CD4-positive, alpha-beta memory T cell (primary cell): ENCODE measurements at regions of chr1 and their contacts with region 1.

Region 1: GRCh38 chr1:159071970-159072582 is 4.5 kb downstream of the AIM2 start:
- DNase-seq: peak in 4 of 5 donors; percentile 43 to 54 (median 50)
- H3K4me3 ChIP-seq: no peak overlapping the region
- H3K4me3 Mint-ChIP-seq: peak overlapping the region in 1 of 8 donors; percentile 3
- H3K27ac ChIP-seq: no peak overlapping the region
- H3K27ac Mint-ChIP-seq: peak overlapping the region in 4 of 7 donors; percentile 10 to 72 (median 58)
- H3K4me1 ChIP-seq: peaks cover 60% of the 10 kb centered on the region
- H3K4me1 Mint-ChIP-seq: peaks cover 25 to 58% (median 39%) of the 10 kb centered on the region in 4 donors
- H3K27me3 ChIP-seq: no peaks in the 10 kb centered on the region
- H3K27me3 Mint-ChIP-seq: no peaks in the 10 kb centered on the region

Region 2: GRCh38 chr1:158203693-158204457 is 868.2 kb before region 1 on chr1:
- CTCF ChIA-PET with region 1: interaction called, 120 read pairs
- POLR2A ChIA-PET with region 1: interaction called, 3 read pairs
- intact Hi-C with region 1: loop called (anchors 1 kb)
- DNase-seq: peak in 4 of 5 donors; percentile 31 to 53 (median 36)
- H3K4me3 ChIP-seq: no peak overlapping the region
- H3K4me3 Mint-ChIP-seq: peak overlapping the region in 1 of 8 donors; percentile 43
- H3K27ac ChIP-seq: no peak overlapping the region
- H3K27ac Mint-ChIP-seq: no peak overlapping the region
- H3K4me1 ChIP-seq: peaks cover 10% of the 10 kb centered on the region
- H3K4me1 Mint-ChIP-seq: peaks cover 7 to 11% (median 9%) of the 10 kb centered on the region in 4 donors
- H3K27me3 ChIP-seq: no peaks in the 10 kb centered on the region
- H3K27me3 Mint-ChIP-seq: peaks cover 13 to 19% of the 10 kb centered on the region in 2 donors

Region 3: GRCh38 chr1:158793604-158794003 is 278.5 kb before region 1 on chr1:
- CTCF ChIA-PET with region 1: interaction called, 10 read pairs
- POLR2A ChIA-PET with region 1: interaction called, 5 read pairs
- intact Hi-C with region 1: loop called (anchors 5 kb)
- DNase-seq: peak in 4 of 5 donors; percentile 26 to 39 (median 33)
- H3K4me3 ChIP-seq: no peak overlapping the region
- H3K4me3 Mint-ChIP-seq: no peak overlapping the region
- H3K27ac ChIP-seq: no peak overlapping the region
- H3K27ac Mint-ChIP-seq: peak overlapping the region in 1 of 7 donors; percentile 37
- H3K4me1 ChIP-seq: no peaks in the 10 kb centered on the region
- H3K4me1 Mint-ChIP-seq: no peaks in the 10 kb centered on the region
- H3K27me3 ChIP-seq: no peaks in the 10 kb centered on the region
- H3K27me3 Mint-ChIP-seq: peaks cover 0 to 3% of the 10 kb centered on the region in 2 donors

Region 4: DNA sequence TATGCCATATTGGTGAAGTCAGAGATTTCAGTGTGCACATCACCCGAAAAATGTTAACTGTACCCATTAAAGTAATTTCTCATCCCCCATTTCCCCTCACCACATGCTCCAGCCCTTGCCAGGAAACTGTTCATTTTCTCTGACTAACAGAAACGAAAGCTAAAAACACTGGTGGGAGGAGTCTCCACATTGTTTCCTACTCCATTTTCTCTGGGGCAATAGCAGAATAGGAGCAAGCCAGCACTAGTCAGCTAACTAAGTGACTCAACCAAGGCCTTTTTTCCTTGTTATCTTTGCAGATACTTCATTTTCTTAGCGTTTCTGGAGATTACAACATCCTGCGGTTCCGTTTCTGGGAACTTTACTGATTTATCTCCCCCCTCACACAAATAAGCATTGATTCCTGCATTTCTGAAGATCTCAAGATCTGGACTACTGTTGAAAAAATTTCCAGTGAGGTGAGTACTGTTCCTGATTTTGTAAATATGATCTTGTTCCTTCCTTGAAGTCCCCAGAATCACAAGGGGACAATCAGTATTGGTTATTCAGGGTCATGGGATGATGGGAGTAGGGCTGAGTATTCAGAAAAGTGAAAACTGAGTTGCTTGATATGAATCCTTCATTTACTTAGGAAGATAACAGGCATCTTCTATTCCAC is 62.2 kb before region 1 on chr1 and contains the start of gene IFI16:
- CTCF ChIA-PET with region 1: interaction called, 18 read pairs
- POLR2A ChIA-PET with region 1: interaction called, 42 read pairs
- intact Hi-C with region 1: loop called (anchors 1 kb)
- DNase-seq: peak; percentile 70 to 85 (median 77)
- H3K4me3 ChIP-seq: peak within 1 kb of the TSS; percentile 54 to 97
- H3K4me3 Mint-ChIP-seq: peak within 1 kb of the TSS; percentile 89 to 99 (median 97)
- H3K27ac ChIP-seq: peak within 1 kb of the TSS; percentile 88
- H3K27ac Mint-ChIP-seq: peak within 1 kb of the TSS; percentile 87 to 95 (median 93)
- H3K4me1 ChIP-seq: peaks cover 36% of the 10 kb centered on the region
- H3K4me1 Mint-ChIP-seq: peaks cover 40 to 71% (median 46%) of the 10 kb centered on the region in 4 donors
- H3K27me3 ChIP-seq: no peaks in the 10 kb centered on the region
- H3K27me3 Mint-ChIP-seq: no peaks in the 10 kb centered on the region
- total RNA-seq, gene IFI16: 160 to 162 TPM

Region 5: GRCh38 chr1:159030877-159031447 is 41.1 kb before region 1 on chr1:
- CTCF ChIA-PET with region 1: interaction called, 15 read pairs
- POLR2A ChIA-PET with region 1: interaction called, 4 read pairs
- intact Hi-C with region 1: no loop called
- DNase-seq: no peak
- H3K4me3 ChIP-seq: no peak overlapping the region
- H3K4me3 Mint-ChIP-seq: no peak overlapping the region
- H3K27ac ChIP-seq: no peak overlapping the region
- H3K27ac Mint-ChIP-seq: peak overlapping the region in 6 of 7 donors; percentile 14 to 77 (median 66)
- H3K4me1 ChIP-seq: peaks cover 41% of the 10 kb centered on the region
- H3K4me1 Mint-ChIP-seq: peaks cover 55 to 78% (median 67%) of the 10 kb centered on the region in 4 donors
- H3K27me3 ChIP-seq: no peaks in the 10 kb centered on the region
- H3K27me3 Mint-ChIP-seq: no peaks in the 10 kb centered on the region

Region 6: DNA sequence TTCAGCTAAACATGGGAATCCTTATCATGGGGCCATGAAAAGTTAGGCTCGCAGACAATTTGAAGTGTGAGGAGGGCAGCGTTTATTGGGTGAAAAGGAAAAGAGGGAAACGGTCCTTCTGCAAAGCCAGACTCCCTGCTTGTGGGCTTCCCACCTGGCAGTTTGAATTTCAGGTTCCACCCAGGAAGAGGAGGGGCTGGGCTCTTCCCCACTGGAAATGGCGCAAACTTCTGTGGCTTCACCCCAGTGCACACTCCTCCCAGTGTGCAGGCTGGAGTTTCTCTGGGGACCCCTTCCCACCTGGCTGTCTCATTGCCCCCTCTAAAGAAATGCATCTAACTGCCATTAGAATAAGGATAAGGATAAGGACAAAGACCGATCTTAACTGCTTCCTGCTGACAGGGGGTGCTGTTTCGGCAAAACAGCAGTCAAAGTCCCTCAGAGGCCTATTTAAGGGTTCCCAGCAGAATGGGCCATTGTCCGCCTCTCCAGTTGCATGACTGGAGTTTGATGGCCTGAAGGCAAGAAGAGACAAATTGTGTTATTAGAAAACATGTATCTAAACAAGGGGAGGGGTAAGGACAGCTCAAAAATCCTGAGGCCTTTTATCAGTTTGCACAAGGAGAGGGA is 15.9 kb before region 1 on chr1:
- CTCF ChIA-PET with region 1: interaction called, 30 read pairs
- POLR2A ChIA-PET with region 1: interaction called, 15 read pairs
- intact Hi-C with region 1: no loop called
- DNase-seq: no peak
- H3K4me3 ChIP-seq: no peak overlapping the region
- H3K4me3 Mint-ChIP-seq: no peak overlapping the region
- H3K27ac ChIP-seq: no peak overlapping the region
- H3K27ac Mint-ChIP-seq: peak overlapping the region in 6 of 7 donors; percentile 42 to 85 (median 69)
- H3K4me1 ChIP-seq: peaks cover 36% of the 10 kb centered on the region
- H3K4me1 Mint-ChIP-seq: peaks cover 30 to 44% (median 42%) of the 10 kb centered on the region in 4 donors
- H3K27me3 ChIP-seq: no peaks in the 10 kb centered on the region
- H3K27me3 Mint-ChIP-seq: no peaks in the 10 kb centered on the region

Region 7: GRCh38 chr1:159089184-159089791 is 17.2 kb after region 1 on chr1:
- CTCF ChIA-PET with region 1: interaction called, 44 read pairs
- POLR2A ChIA-PET with region 1: interaction called, 3 read pairs
- intact Hi-C with region 1: loop called (anchors 1 kb)
- DNase-seq: peak in 4 of 5 donors; percentile 39 to 57 (median 40)
- H3K4me3 ChIP-seq: no peak overlapping the region
- H3K4me3 Mint-ChIP-seq: no peak overlapping the region
- H3K27ac ChIP-seq: no peak overlapping the region
- H3K27ac Mint-ChIP-seq: no peak overlapping the region
- H3K4me1 ChIP-seq: peaks cover 7% of the 10 kb centered on the region
- H3K4me1 Mint-ChIP-seq: peaks cover 6 to 32% (median 22%) of the 10 kb centered on the region in 4 donors
- H3K27me3 ChIP-seq: no peaks in the 10 kb centered on the region
- H3K27me3 Mint-ChIP-seq: no peaks in the 10 kb centered on the region

Region 8: DNA sequence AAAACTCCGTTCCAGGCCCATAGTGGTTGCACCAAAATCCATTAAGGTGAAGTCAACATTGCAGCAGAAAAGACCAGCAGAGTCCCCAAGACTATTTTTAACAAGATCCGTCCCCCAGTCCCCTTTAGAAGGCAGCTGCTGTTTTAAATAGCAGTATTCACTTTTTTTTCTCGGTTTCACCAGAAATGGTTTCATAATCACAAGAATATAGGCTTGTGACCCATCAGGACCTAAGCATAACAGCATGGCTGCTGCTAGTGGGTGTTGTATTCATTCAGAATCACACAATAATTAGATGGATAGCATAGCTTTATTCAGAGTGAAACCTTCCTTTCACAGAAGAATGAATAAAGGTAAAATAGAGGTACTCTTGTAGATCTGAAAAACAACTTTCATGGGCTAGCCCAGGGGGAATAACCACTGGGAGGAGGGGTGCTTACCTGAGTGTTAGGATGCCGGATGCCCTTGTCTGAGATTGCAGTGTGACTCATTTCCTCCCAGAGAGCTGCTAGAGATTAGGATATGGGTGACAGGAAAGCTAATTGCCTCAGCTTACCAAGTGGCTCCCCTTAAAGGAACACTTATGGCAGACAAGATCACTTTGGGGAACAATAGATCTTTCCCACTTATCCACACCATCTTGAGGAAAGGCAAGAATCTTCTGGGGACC is 167.6 kb after region 1 on chr1:
- CTCF ChIA-PET with region 1: no interaction called
- POLR2A ChIA-PET with region 1: no interaction called
- intact Hi-C with region 1: no loop called
- DNase-seq: no peak
- H3K4me3 ChIP-seq: no peak overlapping the region
- H3K4me3 Mint-ChIP-seq: no peak overlapping the region
- H3K27ac ChIP-seq: no peak overlapping the region
- H3K27ac Mint-ChIP-seq: no peak overlapping the region
- H3K4me1 ChIP-seq: no peaks in the 10 kb centered on the region
- H3K4me1 Mint-ChIP-seq: peaks cover 0 to 16% (median 1%) of the 10 kb centered on the region in 4 donors
- H3K27me3 ChIP-seq: no peaks in the 10 kb centered on the region
- H3K27me3 Mint-ChIP-seq: peaks cover 13 to 17% of the 10 kb centered on the region in 2 donors

Region 9: DNA sequence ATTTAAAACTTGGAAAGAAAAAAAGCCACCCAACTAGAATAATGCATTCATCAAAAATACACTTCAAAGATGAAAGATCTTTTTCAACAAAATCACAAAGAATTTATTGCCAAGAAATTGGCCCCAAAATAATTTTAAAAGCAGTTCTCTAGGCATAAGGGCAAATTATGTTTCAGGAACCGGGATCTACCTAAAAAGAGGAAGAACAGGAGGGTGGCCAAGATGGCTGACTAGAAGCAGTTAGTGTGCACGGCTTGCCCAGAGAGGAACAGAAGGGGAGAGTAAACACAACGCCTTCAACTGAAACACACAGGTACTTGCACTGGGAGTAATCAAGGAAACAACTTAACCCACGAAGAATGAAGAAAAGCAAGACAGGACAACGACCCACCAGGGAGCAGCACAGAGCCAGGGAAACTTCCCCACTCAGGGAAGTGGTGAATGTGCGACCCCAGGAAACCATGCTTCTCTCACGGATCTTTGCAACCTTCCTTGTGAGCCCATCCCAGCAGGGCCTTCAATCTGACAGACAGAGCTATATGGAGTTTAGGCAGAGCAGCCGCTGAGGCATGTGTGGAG is 178.7 kb after region 1 on chr1:
- CTCF ChIA-PET with region 1: no interaction called
- POLR2A ChIA-PET with region 1: no interaction called
- intact Hi-C with region 1: no loop called
- DNase-seq: no peak
- H3K4me3 ChIP-seq: no peak overlapping the region
- H3K4me3 Mint-ChIP-seq: no peak overlapping the region
- H3K27ac ChIP-seq: no peak overlapping the region
- H3K27ac Mint-ChIP-seq: no peak overlapping the region
- H3K4me1 ChIP-seq: no peaks in the 10 kb centered on the region
- H3K4me1 Mint-ChIP-seq: no peaks in the 10 kb centered on the region
- H3K27me3 ChIP-seq: no peaks in the 10 kb centered on the region
- H3K27me3 Mint-ChIP-seq: peaks cover 16 to 19% of the 10 kb centered on the region in 2 donors